Posterior vena cava (tissue), 2 donors: ENCODE measurements at regions of chr18 and their contacts with region 1.

Region 1: GRCh38 chr18:26656944-26657536 is 108.7 kb upstream of the KCTD1 start:
- DNase-seq: peak; percentile 93

Region 2: GRCh38 chr18:26548429-26549262 is 108.4 kb before region 1 on chr18 and contains the start of gene KCTD1:
- intact Hi-C with region 1: loop called in 1 of 2 experiments (anchors 10 kb)
- DNase-seq: peak; percentile 94
- total RNA-seq, gene KCTD1: 8.5 to 9.2 TPM